Right ventricle myocardium inferior (tissue), 1 donor: ENCODE measurements at regions of chr11 and their contacts with region 1.

Region 1: GRCh38 chr11:11157185-11157584 is 195.9 kb downstream of the CSNK2A3 start:
- DNase-seq: no peak
- ATAC-seq: no peak

Region 2: DNA sequence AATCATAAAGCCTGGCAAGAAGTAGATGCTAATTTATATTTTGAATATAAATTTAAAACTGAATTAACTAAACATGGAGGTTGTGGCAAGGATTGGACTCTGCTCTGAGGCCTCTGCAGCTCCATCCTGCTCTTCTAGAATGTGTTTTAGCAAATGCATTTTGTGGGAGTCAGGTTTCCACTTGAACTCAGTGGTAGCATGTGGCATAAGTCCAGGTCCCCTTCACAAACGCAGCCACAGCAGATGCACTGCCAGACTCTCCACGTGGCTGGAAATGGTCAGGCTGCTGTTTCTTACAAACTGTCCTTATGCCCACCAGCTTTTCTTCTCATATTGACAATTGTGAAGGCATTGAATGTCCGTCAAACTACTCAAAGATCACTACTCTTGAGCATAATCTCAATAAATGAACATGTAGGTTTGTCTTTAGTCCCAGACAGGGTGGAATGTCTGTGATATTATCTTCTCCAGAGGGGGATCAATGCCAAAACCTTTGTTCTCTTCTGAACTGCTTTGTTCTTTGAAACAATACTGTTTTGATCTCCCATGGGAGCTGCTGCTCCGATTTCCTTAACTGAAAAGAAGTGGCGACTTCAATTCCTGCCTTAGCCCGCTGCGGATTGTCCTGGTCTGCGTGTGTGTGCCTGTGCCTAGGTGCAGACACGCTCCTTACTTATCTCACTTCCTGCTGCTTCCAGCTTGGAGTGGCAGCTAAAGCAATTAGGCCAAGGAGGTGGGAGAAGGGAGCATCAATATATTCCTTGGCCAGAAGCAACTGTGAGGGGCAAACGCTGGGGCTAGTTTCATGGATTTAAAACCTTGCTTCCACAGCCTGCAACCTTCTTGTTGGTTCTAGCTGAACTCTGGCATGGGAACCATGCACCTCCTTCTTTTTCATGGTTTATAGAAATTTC is 372.7 kb before region 1 on chr11:
- intact Hi-C with region 1: loop called (anchors 10 kb)
- DNase-seq: no peak
- ATAC-seq: peak; percentile 48

Region 3: GRCh38 chr11:11265994-11266606 is 108.9 kb after region 1 on chr11:
- intact Hi-C with region 1: loop called (anchors 10 kb)
- DNase-seq: no peak
- ATAC-seq: peak; percentile 48